GM10248 (cell line): ENCODE measurements at regions of chr9 and their contacts with region 1.

Region 1: DNA sequence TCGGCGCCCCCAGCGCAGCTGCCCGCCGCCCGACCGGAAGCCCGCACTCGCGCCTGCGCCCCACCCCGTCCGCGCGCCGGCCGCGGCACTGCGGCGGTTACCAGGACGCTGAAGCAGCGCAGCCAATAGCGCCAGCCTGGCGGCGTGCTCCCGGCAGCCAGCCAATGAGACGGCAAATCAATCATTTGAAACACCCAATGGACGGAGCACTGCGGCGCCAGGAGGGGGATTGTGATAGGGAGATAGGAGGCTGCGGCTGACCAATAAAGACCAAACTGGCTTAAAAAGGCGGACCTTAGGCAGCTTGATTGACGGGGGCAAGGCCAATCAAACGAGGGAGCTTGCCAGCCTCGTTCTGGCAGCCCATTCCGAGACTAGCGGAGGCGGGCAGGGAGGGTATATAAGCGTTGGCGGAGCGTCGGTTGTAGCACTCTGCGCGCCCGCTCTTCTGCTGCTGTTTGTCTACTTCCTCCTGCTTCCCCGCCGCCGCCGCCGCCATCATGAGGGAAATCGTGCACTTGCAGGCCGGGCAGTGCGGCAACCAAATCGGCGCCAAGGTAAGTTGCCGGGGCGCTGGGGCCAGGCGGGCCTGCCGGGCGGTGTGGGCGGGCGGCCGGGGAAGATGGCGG is at the start of gene TUBB4B:
- DNase-seq: peak; percentile 99
- CTCF ChIP-seq: no peak

Region 2: GRCh38 chr9:137029058-137029936 is 211.7 kb before region 1 on chr9:
- CTCF ChIA-PET with region 1: interaction called, 16 read pairs
- POLR2A ChIA-PET with region 1: interaction called, 4 read pairs
- DNase-seq: peak; percentile 83
- CTCF ChIP-seq: peak; percentile 98

Region 3: DNA sequence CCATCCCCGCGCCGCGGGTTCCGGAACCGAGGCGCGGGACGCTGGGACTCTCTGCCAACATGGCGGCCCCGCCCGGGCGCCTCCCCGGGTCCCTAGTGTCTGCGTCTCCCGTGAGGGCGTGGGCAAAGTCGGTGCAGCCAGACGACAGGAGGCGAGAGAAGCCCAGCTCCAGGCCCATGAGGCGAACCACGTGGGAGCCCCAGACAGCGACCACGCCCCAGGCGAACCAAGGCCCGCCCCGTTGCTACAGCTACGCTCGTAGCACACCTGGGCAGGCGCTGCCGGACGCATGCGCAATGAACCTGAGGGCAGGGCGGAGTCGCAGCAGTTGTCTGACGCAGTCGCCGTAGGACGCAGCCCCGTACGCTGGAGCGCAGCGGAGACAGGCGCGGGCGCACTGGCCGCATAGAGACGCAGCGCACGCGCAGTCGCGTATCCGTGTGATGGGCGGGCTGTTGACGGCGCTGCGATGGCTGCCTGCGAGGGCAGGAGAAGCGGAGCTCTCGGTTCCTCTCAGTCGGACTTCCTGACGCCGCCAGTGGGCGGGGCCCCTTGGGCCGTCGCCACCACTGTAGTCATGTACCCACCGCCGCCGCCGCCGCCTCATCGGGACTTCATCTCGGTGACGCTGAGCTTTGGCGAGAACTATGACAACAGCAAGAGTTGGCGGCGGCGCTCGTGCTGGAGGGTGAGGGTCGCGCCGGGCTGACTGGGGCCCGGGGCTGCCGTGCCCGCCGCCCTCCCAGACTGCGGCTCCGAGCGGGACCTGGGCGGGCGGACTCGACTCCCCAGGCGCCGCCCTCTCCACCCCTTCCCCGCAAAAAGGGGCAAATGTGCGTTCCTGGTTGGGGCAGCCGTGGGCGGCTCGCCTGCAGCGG is 154.2 kb before region 1 on chr9 and contains the start of gene MAN1B1:
- CTCF ChIA-PET with region 1: interaction called, 14 read pairs
- POLR2A ChIA-PET with region 1: interaction called, 15 read pairs
- DNase-seq: peak; percentile 98
- CTCF ChIP-seq: no peak

Region 4: DNA sequence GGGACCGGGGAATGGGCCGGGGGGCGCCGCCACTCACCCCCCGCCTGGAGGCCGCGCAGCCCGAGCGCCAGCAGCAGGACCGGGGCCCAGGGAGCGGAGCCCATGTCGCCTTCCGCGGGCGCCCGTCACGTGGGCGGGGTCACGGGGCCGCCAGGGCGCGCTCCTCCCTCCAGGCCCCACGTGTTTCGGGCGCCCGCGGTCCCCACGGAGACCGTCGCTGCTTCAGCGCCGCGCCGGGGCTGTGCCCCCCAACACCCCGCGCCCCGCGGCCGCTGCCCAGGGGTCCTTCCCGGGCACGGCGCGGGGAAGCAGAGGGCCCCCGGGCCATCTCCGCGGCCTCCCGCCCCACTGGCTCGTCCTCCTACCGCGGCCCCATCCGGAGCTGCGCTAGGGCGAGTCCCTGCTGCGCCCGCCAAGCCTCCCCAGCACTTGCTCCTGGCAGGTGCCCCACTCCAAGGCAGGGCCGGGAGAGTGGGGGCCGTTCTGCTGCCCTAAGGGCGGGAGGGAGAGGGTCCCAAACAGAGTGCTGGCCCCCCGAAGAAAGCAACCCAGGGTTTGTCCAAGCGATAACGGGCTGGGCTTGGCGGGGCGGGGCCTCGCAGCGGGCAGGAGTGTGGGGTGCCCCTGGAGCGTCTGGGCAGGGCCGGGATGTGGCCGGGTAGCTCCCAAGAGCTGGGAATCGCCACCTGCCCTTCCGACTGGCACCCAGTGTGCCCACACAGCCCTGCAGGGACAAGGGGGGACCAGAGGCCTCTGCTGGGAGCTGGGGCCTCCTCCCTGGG is 126.2 kb before region 1 on chr9 and contains the start of gene DPP7:
- CTCF ChIA-PET with region 1: interaction called, 14 read pairs
- POLR2A ChIA-PET with region 1: interaction called, 4 read pairs
- DNase-seq: peak; percentile 94
- CTCF ChIP-seq: no peak

Region 5: GRCh38 chr9:137188490-137189296 is 52.3 kb before region 1 on chr9 and contains the starts of genes ANAPC2 and SSNA1:
- CTCF ChIA-PET with region 1: interaction called, 24 read pairs
- POLR2A ChIA-PET with region 1: interaction called, 8 read pairs
- DNase-seq: peak; percentile 97
- CTCF ChIP-seq: peak; percentile 49

Region 6: GRCh38 chr9:137223078-137223970 is 17.7 kb before region 1 on chr9:
- CTCF ChIA-PET with region 1: interaction called, 92 read pairs
- POLR2A ChIA-PET with region 1: interaction called, 24 read pairs
- DNase-seq: peak; percentile 98
- CTCF ChIP-seq: no peak